Left colon (tissue), 2 donors: ENCODE measurements at regions of chr6 and their contacts with region 1.

Region 1: GRCh38 chr6:157314705-157315321 is 8.5 kb downstream of the TMEM242 start:
- DNase-seq: no peak
- ATAC-seq: peak; percentile 87

Region 2: GRCh38 chr6:157597446-157598312 is 282.9 kb after region 1 on chr6:
- intact Hi-C with region 1: loop called in 1 of 2 experiments (anchors 10 kb)
- DNase-seq: peak in 1 of 2 donors; percentile 72
- ATAC-seq: peak; percentile 90

Region 3: GRCh38 chr6:157667211-157668008 is 352.6 kb after region 1 on chr6:
- intact Hi-C with region 1: loop called in 1 of 2 experiments (anchors 5 kb)
- DNase-seq: peak in 1 of 2 donors; percentile 47
- ATAC-seq: peak; percentile 58